H1 (cell line): ENCODE measurements at regions of chr1 and their contacts with region 1.

Region 1: GRCh38 chr1:28668191-28668955 is at the start of gene GMEB1:
- DNase-seq: peak in 1 of 2 experiments; percentile 83
- H3K4me3 ChIP-seq: peak within 1 kb of the TSS; percentile 77 to 94 (median 79)
- H3K27ac ChIP-seq: peak within 1 kb of the TSS; percentile 87
- H3K4me1 ChIP-seq: peaks cover 4 to 15% (median 7%) of the 10 kb centered on the region in 4 experiments; a peak in 5 of 7 replicates
- H3K27me3 ChIP-seq: no peaks in the 10 kb centered on the region
- CTCF ChIP-seq: no peak
- EP300 ChIP-seq: no peak
- POLR2A ChIP-seq: peak in 1 of 2 experiments; percentile 23; a peak in 1 of 3 replicates
- RAD21 ChIP-seq: no peak
- total RNA-seq, gene GMEB1: 26.2 and 28.1 TPM in 2 replicates

Region 2: DNA sequence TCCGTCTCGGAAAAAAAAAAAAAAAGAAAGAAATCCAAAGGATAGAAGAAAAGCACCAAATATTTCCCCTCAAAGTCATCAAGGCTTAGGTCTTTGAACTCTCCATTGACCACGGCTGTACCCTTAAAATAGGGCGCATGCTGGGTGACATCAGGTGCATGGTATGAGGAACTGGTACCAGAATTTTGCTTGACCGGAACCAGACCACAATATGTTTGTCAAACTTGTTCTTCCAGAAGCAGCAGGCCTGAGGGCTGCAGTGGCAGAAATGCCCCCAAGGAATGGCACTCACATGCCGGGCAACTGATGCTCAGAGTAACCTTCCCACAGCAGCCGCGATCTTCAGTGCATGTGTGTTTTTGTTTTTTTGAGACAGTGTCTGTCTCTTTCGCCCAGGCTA is 141.5 kb before region 1 on chr1:
- CTCF ChIA-PET with region 1: no interaction called
- POLR2A ChIA-PET with region 1: no interaction called
- DNase-seq: no peak
- H3K4me3 ChIP-seq: no peak overlapping the region
- H3K27ac ChIP-seq: no peak overlapping the region
- H3K4me1 ChIP-seq: peaks cover 0 to under 1% (median 0%) of the 10 kb centered on the region in 4 experiments; a peak in 2 of 7 replicates
- H3K27me3 ChIP-seq: no peaks in the 10 kb centered on the region
- CTCF ChIP-seq: no peak
- EP300 ChIP-seq: no peak
- POLR2A ChIP-seq: no peak
- RAD21 ChIP-seq: no peak

Region 3: GRCh38 chr1:28552758-28553663 is 115.4 kb before region 1 on chr1 and contains the start of gene TRNAU1AP:
- CTCF ChIA-PET with region 1: no interaction called
- POLR2A ChIA-PET with region 1: no interaction called
- DNase-seq: peak; percentile 82 to 98
- H3K4me3 ChIP-seq: peak within 1 kb of the TSS; percentile 72 to 96 (median 90)
- H3K27ac ChIP-seq: peak within 1 kb of the TSS; percentile 49
- H3K4me1 ChIP-seq: no peaks in the 10 kb centered on the region
- H3K27me3 ChIP-seq: no peaks in the 10 kb centered on the region
- CTCF ChIP-seq: no peak
- EP300 ChIP-seq: peak in 1 of 2 experiments; percentile 65; a peak in 1 of 3 replicates
- POLR2A ChIP-seq: no peak; a peak in 1 of 3 replicates
- RAD21 ChIP-seq: peak; percentile 2 to 18; a peak in 1 of 4 replicates
- total RNA-seq, gene TRNAU1AP: 30.8 and 35.2 TPM in 2 replicates

Region 4: DNA sequence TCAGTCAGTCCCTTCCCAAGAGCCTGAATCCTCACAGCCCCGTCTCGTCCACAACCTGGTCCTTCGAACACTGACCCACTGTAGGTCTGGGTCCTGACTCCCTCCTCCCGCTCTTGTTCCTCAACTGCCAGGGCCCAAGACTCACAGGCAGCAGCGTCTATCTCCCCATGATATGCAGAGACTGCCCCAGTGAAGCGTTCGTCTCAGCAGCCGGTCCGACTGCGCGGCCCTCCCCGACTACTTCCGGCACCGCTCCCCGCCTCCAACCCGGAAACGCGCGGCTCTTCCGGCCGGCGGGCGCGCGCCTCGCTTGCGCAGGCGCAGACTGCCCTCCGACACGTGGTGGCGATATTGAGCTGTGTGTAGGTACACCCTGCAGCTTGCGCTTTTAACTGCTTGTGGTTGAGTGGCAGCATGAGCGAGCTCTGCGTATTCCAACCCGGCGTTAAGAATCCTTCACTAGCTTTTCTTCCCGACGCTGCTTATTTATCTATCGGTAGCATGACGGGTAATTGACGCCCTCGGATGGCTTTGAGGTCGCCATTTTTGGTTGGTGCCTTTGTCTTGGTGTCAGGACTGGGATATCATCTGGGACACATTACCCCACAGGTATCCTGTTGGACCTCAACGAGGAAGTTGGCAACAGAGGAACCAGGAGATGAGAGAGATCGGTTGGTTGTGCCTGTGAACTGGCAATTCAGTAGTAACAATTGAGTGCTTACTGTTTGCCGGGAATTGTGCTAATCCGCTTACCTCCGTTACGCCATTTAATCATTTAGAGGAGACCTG is 25.3 kb before region 1 on chr1 and contains the start of gene TAF12:
- CTCF ChIA-PET with region 1: interaction called, 4 read pairs
- POLR2A ChIA-PET with region 1: interaction called, 56 read pairs
- DNase-seq: peak; percentile 87 to 92
- H3K4me3 ChIP-seq: peak within 1 kb of the TSS; percentile 73 to 95 (median 86)
- H3K27ac ChIP-seq: peak within 1 kb of the TSS; percentile 84
- H3K4me1 ChIP-seq: peaks cover 0 to 5% (median 4%) of the 10 kb centered on the region in 4 experiments; a peak in 3 of 7 replicates
- H3K27me3 ChIP-seq: no peaks in the 10 kb centered on the region
- CTCF ChIP-seq: peak; percentile 52 to 59 (median 59)
- EP300 ChIP-seq: no peak
- POLR2A ChIP-seq: peak; percentile 92 to 94
- RAD21 ChIP-seq: peak; percentile 58 to 64
- total RNA-seq, gene TAF12: 23.7 and 27.2 TPM in 2 replicates

Region 5: GRCh38 chr1:28648474-28649198 is 19.7 kb before region 1 on chr1 and contains the start of gene RNU11:
- CTCF ChIA-PET with region 1: interaction called, 3 read pairs
- POLR2A ChIA-PET with region 1: interaction called, 56 read pairs
- DNase-seq: peak; percentile 75 to 90
- H3K4me3 ChIP-seq: peak within 1 kb of the TSS; percentile 41 to 57 (median 45)
- H3K27ac ChIP-seq: peak within 1 kb of the TSS; percentile 99
- H3K4me1 ChIP-seq: peaks cover 0 to 4% (median 0%) of the 10 kb centered on the region in 4 experiments; a peak in 4 of 7 replicates
- H3K27me3 ChIP-seq: no peaks in the 10 kb centered on the region
- CTCF ChIP-seq: no peak
- EP300 ChIP-seq: peak in 1 of 2 experiments; percentile 73; a peak in 2 of 3 replicates
- POLR2A ChIP-seq: peak; percentile 100
- RAD21 ChIP-seq: 0 out of 4 replicates have a peak, but pooled peaks of 1 of the 2 experiments have one; percentile 8
- total RNA-seq, gene RNU11: not detected in 2 replicates

Region 6: GRCh38 chr1:28684937-28685336 is 16.6 kb after region 1 on chr1:
- CTCF ChIA-PET with region 1: interaction called, 5 read pairs
- POLR2A ChIA-PET with region 1: interaction called, 14 read pairs
- DNase-seq: no peak
- H3K4me3 ChIP-seq: no peak overlapping the region
- H3K27ac ChIP-seq: no peak overlapping the region
- H3K4me1 ChIP-seq: no peaks in the 10 kb centered on the region
- H3K27me3 ChIP-seq: no peaks in the 10 kb centered on the region
- CTCF ChIP-seq: no peak
- EP300 ChIP-seq: no peak
- POLR2A ChIP-seq: no peak
- RAD21 ChIP-seq: no peak